Activated T-helper 1 cell treated with anti-CD3 and anti-CD28 coated beads, Interleukin-12 subunit alpha, Interleukin-12 subunit beta, Interleukin-2, Interleukin-4 antibody, amounts not matched to agents 30 ng/mL and 10 ng/mL and 1 ng/mL, durations not matched to agents 14 hours and 24 hours and 36 hours (primary cell): ENCODE measurements at regions of chr3 and their contacts with region 1.

Region 1: GRCh38 chr3:58355179-58355578 is 22.5 kb downstream of the PXK start:
- DNase-seq: no peak
- H3K4me3 Mint-ChIP-seq: no peak overlapping the region
- H3K27ac Mint-ChIP-seq: peak overlapping the region; percentile 96
- H3K4me1 Mint-ChIP-seq: peaks cover 75% of the 10 kb centered on the region
- H3K27me3 Mint-ChIP-seq: no peaks in the 10 kb centered on the region

Region 2: DNA sequence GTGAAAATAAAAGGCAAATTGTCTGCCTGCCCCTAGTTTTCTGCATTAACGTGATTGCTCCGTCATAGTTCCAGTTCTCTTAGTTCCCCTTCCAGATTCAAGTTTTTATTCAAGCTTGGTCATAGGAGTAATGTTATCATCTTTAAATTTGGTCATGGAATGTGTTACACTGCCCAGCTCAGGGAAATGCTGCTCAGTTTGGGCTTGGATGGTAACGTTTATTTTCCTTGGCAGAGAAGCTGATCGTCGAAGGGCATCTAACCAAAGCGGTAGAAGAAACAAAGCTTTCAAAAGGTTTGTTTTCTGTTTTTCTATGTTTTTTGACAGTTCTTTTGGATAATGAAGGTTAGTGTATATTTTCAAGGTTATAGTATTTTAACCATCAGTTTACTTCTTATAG is 465.4 kb before region 1 on chr3:
- intact Hi-C with region 1: no loop called
- DNase-seq: no peak
- H3K4me3 Mint-ChIP-seq: no peak overlapping the region
- H3K27ac Mint-ChIP-seq: no peak overlapping the region
- H3K4me1 Mint-ChIP-seq: no peaks in the 10 kb centered on the region
- H3K27me3 Mint-ChIP-seq: no peaks in the 10 kb centered on the region

Region 3: GRCh38 chr3:58471025-58471887 is 116.1 kb after region 1 on chr3:
- intact Hi-C with region 1: loop called (anchors 2 kb)
- DNase-seq: peak; percentile 73
- H3K4me3 Mint-ChIP-seq: peak overlapping the region; percentile 37
- H3K27ac Mint-ChIP-seq: peak overlapping the region; percentile 68
- H3K4me1 Mint-ChIP-seq: peaks cover 59% of the 10 kb centered on the region
- H3K27me3 Mint-ChIP-seq: peaks cover 8% of the 10 kb centered on the region